Activated CD8-positive, alpha-beta T cell treated with anti-CD3 and anti-CD28 coated beads, Interleukin-2, amount 10 ng/mL, durations not matched to agents 7 days and 5 days (primary cell): ENCODE measurements at regions of chr3 and their contacts with region 1.

Region 1: DNA sequence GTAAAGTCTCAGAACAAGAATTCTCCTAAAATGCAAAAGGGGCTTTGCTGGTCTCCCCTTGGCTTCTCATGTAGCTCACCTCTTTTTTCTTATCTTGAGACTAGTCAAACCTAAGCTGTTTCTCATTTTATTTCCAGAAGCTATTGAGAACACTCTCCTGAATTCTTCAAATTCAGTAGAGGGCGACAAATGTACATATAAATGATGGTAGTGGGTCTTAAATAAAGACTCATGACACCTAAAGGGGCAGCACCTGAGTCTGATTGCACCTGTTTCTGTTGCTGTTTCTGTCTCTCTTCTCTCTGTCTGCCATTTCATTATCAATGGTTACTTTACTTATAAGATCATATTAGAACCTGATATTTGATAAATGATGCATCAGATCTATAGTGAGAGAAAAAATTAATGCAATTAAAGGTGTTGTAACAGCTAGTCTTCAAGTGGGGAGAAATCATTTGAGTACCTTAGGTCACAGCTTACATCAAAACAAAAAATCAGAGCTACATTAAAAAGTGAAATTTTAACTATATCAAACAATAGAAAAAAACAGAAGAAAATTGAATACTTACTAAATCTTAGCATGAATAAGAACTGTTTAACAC is 7.0 kb downstream of the ADIPOQ start:
- DNase-seq: no peak
- ATAC-seq: peak; percentile 75
- H3K4me3 Mint-ChIP-seq: no peak overlapping the region
- H3K27ac Mint-ChIP-seq: no peak overlapping the region
- H3K4me1 Mint-ChIP-seq: peaks cover 10% of the 10 kb centered on the region
- H3K27me3 Mint-ChIP-seq: peaks cover 14% of the 10 kb centered on the region

Region 2: DNA sequence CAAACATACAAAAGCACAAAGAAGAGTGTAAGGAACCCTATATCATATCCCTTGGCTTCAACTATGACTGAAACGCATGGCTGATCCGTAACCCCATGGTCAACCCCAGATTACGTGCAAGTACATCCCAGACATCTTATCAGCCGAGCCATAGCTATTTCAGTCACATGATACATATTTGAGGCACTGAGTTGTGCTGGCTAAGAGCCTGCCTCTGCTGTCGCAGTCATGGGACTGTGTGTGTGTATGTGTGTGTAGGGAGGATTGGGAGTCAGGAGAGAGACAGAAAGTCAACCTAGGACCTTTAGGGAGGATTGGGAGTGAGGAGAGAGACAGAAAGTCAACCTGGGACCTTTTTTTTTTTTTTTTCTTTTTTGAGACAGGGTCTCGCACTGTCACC is 89.2 kb after region 1 on chr3:
- CTCF ChIA-PET with region 1: interaction called, 78 read pairs
- POLR2A ChIA-PET with region 1: no interaction called
- DNase-seq: no peak
- ATAC-seq: no peak
- H3K4me3 Mint-ChIP-seq: no peak overlapping the region
- H3K27ac Mint-ChIP-seq: no peak overlapping the region
- H3K4me1 Mint-ChIP-seq: peaks cover 11% of the 10 kb centered on the region
- H3K27me3 Mint-ChIP-seq: no peaks in the 10 kb centered on the region

Region 3: GRCh38 chr3:187031934-187032333 is 182.5 kb after region 1 on chr3:
- CTCF ChIA-PET with region 1: interaction called, 19 read pairs
- POLR2A ChIA-PET with region 1: no interaction called
- DNase-seq: no peak
- ATAC-seq: no peak
- H3K4me3 Mint-ChIP-seq: no peak overlapping the region
- H3K27ac Mint-ChIP-seq: peak overlapping the region; percentile 33
- H3K4me1 Mint-ChIP-seq: peaks cover 62% of the 10 kb centered on the region
- H3K27me3 Mint-ChIP-seq: no peaks in the 10 kb centered on the region

Region 4: GRCh38 chr3:187101184-187102072 is 252.0 kb after region 1 on chr3:
- CTCF ChIA-PET with region 1: interaction called, 18 read pairs
- POLR2A ChIA-PET with region 1: no interaction called
- DNase-seq: peak; percentile 70
- ATAC-seq: peak; percentile 81
- H3K4me3 Mint-ChIP-seq: peak overlapping the region; percentile 32
- H3K27ac Mint-ChIP-seq: peak overlapping the region; percentile 74
- H3K4me1 Mint-ChIP-seq: peaks cover 35% of the 10 kb centered on the region
- H3K27me3 Mint-ChIP-seq: no peaks in the 10 kb centered on the region

Region 5: DNA sequence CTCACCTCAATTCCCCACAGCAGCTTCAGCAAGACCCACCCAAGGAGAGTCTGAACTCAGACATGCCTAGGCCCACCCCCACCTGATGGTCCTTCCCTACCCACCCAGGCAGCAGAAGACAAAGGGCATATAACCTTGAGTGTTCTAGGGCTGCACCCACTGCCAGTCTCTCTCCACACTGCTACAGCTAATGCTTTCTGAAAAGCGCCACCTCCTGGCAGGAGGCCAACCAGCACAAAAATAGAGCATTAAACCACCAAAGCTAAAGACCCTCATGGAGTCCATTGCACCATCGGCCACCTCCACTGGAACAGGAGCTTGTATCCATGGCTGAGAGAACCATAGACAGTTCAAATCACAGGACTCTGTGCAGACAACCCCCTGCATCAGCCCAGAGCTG is 301.1 kb after region 1 on chr3:
- CTCF ChIA-PET with region 1: interaction called, 27 read pairs
- POLR2A ChIA-PET with region 1: no interaction called
- DNase-seq: peak; percentile 71
- ATAC-seq: peak; percentile 64
- H3K4me3 Mint-ChIP-seq: no peak overlapping the region
- H3K27ac Mint-ChIP-seq: no peak overlapping the region
- H3K4me1 Mint-ChIP-seq: peaks cover 3% of the 10 kb centered on the region
- H3K27me3 Mint-ChIP-seq: peaks cover 37% of the 10 kb centered on the region